ENCODE measurements at regions of chr10 and their contacts with region 1.

Region 1: DNA sequence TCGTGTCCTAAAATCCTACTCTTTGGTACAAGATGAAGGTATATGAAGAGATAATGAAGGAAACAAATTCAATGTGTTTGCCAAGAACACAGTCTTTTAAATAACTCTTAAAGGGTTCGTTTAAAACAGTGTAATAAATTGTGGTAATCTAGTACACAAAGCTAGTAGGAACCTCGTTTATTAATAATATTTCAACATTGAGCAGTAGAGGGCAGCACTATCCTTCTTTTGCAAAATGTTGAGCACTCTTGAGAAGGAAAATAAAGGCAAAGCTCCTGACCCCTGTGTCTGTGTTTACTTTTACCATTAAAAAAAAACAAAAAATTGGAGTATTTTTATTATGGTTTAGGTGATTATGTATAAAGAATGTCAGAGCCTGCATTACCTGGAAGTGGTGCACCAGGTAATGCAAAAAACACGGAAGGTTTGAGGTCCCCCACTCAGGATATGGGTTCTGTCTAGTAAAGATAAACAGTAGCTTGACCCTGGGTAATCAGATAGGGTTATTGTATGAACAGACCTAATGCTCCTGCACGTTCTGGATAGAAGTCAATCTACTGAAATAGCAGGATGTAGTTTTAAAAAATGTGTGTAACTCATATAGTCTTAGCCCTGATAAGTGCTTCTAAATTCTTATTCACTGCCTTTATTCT is 5.7 kb upstream of the GOT1 start:
- DNase-seq: no peak
- H3K4me3 ChIP-seq: no peak overlapping the region
- H3K27ac ChIP-seq: no peak overlapping the region
- H3K4me1 ChIP-seq: no peaks in the 10 kb centered on the region
- H3K27me3 ChIP-seq: no peaks in the 10 kb centered on the region
- CTCF ChIP-seq: peak in 2 of 3 experiments; percentile 38 to 40; a peak in 2 of 4 replicates
- EP300 ChIP-seq: no peak
- POLR2A ChIP-seq: no peak
- RAD21 ChIP-seq: peak; percentile 67 to 70

Region 2: DNA sequence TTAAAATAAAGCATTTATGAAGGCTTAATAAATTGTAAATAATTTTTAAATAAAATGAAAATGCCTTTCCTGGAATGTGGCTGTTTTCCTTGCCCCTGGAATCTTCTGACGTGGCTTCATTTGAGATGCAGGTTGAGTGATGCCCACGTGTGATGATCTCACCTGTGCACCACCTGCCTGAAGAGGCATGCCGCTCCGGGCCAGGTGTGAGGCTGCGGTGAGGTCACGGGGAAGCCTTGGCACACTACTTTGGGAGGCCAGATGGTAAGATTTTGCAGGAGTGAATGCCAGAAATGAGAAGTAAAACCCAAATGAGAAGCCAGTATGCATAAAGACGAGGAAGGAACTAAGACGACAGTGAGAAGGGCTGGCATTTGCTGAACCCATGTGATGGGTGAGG is 41.9 kb before region 1 on chr10:
- CTCF ChIA-PET with region 1: interaction called, 21 read pairs
- POLR2A ChIA-PET with region 1: interaction called, 17 read pairs
- DNase-seq: no peak
- H3K4me3 ChIP-seq: no peak overlapping the region
- H3K27ac ChIP-seq: no peak overlapping the region
- H3K4me1 ChIP-seq: peaks cover 3 to 18% (median 11%) of the 10 kb centered on the region in 4 experiments; a peak in 6 of 7 replicates
- H3K27me3 ChIP-seq: no peaks in the 10 kb centered on the region
- CTCF ChIP-seq: no peak
- EP300 ChIP-seq: no peak
- POLR2A ChIP-seq: no peak
- RAD21 ChIP-seq: no peak

Region 3: GRCh38 chr10:99450624-99451498 is 14.7 kb after region 1 on chr10:
- CTCF ChIA-PET with region 1: interaction called, 44 read pairs
- POLR2A ChIA-PET with region 1: interaction called, 5 read pairs
- DNase-seq: no peak
- H3K4me3 ChIP-seq: peak overlapping the region in 1 of 4 experiments; percentile 31; a peak in 1 of 8 replicates
- H3K27ac ChIP-seq: no peak overlapping the region
- H3K4me1 ChIP-seq: peaks cover 3 to 10% (median 8%) of the 10 kb centered on the region in 4 experiments; a peak in 6 of 7 replicates
- H3K27me3 ChIP-seq: no peaks in the 10 kb centered on the region; a peak in 1 of 7 replicates
- CTCF ChIP-seq: no peak
- EP300 ChIP-seq: no peak
- POLR2A ChIP-seq: no peak
- RAD21 ChIP-seq: no peak

Region 4: DNA sequence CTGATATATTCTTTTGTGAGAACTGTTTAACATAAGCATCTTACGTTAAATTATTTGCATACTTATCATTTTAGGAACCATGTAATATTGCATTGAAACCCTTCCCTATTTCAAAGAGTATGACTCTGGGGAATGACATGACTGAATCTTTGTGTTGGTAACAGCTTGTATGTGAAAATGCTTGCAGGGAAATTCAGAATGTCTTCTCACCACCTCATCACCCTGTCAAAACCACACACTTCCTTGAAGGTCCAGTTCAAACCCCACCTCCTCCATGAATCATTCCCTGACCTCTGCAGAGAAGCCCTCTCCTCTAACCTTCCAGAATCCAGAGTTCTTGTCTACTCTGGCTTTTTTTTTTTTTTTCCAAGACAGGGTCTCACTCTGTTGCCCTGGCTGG is 70.3 kb after region 1 on chr10:
- CTCF ChIA-PET with region 1: interaction called, 14 read pairs
- POLR2A ChIA-PET with region 1: no interaction called
- DNase-seq: no peak
- H3K4me3 ChIP-seq: no peak overlapping the region
- H3K27ac ChIP-seq: no peak overlapping the region
- H3K4me1 ChIP-seq: no peaks in the 10 kb centered on the region
- H3K27me3 ChIP-seq: peaks cover 0 to 9% (median 0%) of the 10 kb centered on the region in 4 experiments; a peak in 3 of 7 replicates
- CTCF ChIP-seq: no peak
- EP300 ChIP-seq: no peak
- POLR2A ChIP-seq: no peak
- RAD21 ChIP-seq: no peak

Region 5: GRCh38 chr10:99548041-99548530 is 112.0 kb after region 1 on chr10:
- CTCF ChIA-PET with region 1: interaction called, 20 read pairs
- POLR2A ChIA-PET with region 1: interaction called, 5 read pairs
- DNase-seq: no peak
- H3K4me3 ChIP-seq: no peak overlapping the region
- H3K27ac ChIP-seq: no peak overlapping the region
- H3K4me1 ChIP-seq: no peaks in the 10 kb centered on the region; a peak in 1 of 7 replicates
- H3K27me3 ChIP-seq: peaks cover 4 to 33% (median 21%) of the 10 kb centered on the region in 4 experiments
- CTCF ChIP-seq: peak; percentile 62 to 82 (median 78)
- EP300 ChIP-seq: no peak
- POLR2A ChIP-seq: no peak
- RAD21 ChIP-seq: peak; percentile 67 to 77

Measured in H1 (cell line).